Activated T-helper 1 cell treated with anti-CD3 and anti-CD28 coated beads, Interleukin-12 subunit alpha, Interleukin-12 subunit beta, Interleukin-2, Interleukin-4 antibody, amounts not matched to agents 30 ng/mL and 10 ng/mL and 1 ng/mL, durations not matched to agents 14 hours and 24 hours and 36 hours (primary cell): ENCODE measurements at regions of chr3 and their contacts with region 1.

Region 1: GRCh38 chr3:47781685-47782445 is at the start of gene SMARCC1:
- DNase-seq: peak; percentile 98
- H3K4me3 Mint-ChIP-seq: peak within 1 kb of the TSS; percentile 96
- H3K27ac Mint-ChIP-seq: peak within 1 kb of the TSS; percentile 98
- H3K4me1 Mint-ChIP-seq: peaks cover 28% of the 10 kb centered on the region
- H3K27me3 Mint-ChIP-seq: no peaks in the 10 kb centered on the region
- total RNA-seq, gene SMARCC1: 136 and 148 TPM in 2 replicates

Region 2: DNA sequence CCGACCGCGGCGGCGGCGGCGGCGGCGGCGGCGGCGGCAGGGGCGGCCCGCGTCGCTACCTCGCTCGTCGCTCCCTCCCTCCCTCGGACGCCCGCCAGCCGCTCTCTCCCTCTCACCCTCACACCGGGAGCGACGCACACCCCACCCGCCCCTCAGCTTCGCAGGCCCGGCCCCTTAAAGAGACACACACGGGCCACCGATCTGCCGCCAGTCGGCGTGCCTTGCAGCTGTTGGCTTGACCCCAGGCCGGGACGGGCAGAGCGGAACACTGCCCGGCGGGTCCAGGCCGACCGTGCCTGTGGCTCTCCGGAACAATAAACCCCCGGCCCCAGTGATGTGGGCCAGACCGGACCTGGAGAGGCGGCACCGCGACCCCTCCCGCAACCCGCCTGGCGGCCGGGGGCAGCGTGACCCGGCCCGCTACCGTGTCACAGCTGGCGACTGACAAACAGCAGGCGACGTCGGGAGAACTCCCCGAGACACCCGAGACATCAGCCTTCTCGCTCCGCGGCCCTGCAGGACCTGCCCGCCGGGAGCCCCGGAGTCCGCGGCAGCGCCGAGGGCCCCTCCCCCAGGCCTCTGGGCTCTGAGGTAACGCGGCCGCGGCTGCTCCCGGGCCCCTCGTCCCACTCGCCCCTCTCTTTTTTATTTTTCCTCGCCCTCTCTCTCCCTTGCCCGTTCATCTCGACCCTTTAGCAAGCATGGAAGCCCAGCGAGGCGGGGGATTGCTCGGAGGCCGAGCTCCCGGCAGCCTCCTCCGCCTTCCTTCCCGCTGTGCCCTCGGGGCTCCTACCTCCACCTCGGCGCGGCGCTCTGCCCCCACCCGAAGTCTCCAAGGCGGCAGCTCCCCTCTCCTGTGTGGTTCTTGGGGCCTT is 617.6 kb before region 1 on chr3 and contains the start of gene SETD2:
- intact Hi-C with region 1: loop called (anchors 10 kb)
- DNase-seq: peak; percentile 75
- H3K4me3 Mint-ChIP-seq: peak within 1 kb of the TSS; percentile 99
- H3K27ac Mint-ChIP-seq: peak within 1 kb of the TSS; percentile 100
- H3K4me1 Mint-ChIP-seq: peaks cover 53% of the 10 kb centered on the region
- H3K27me3 Mint-ChIP-seq: peaks cover 2% of the 10 kb centered on the region
- total RNA-seq, gene SETD2: 41.2 and 45.7 TPM in 2 replicates

Region 3: GRCh38 chr3:47380601-47381316 is 401.1 kb before region 1 on chr3 and contains the start of gene PTPN23:
- intact Hi-C with region 1: loop called (anchors 1 kb)
- DNase-seq: peak; percentile 99
- H3K4me3 Mint-ChIP-seq: peak within 1 kb of the TSS; percentile 100
- H3K27ac Mint-ChIP-seq: peak within 1 kb of the TSS; percentile 100
- H3K4me1 Mint-ChIP-seq: peaks cover 43% of the 10 kb centered on the region
- H3K27me3 Mint-ChIP-seq: no peaks in the 10 kb centered on the region
- total RNA-seq, gene PTPN23: 33.7 and 35.1 TPM in 2 replicates

Region 4: DNA sequence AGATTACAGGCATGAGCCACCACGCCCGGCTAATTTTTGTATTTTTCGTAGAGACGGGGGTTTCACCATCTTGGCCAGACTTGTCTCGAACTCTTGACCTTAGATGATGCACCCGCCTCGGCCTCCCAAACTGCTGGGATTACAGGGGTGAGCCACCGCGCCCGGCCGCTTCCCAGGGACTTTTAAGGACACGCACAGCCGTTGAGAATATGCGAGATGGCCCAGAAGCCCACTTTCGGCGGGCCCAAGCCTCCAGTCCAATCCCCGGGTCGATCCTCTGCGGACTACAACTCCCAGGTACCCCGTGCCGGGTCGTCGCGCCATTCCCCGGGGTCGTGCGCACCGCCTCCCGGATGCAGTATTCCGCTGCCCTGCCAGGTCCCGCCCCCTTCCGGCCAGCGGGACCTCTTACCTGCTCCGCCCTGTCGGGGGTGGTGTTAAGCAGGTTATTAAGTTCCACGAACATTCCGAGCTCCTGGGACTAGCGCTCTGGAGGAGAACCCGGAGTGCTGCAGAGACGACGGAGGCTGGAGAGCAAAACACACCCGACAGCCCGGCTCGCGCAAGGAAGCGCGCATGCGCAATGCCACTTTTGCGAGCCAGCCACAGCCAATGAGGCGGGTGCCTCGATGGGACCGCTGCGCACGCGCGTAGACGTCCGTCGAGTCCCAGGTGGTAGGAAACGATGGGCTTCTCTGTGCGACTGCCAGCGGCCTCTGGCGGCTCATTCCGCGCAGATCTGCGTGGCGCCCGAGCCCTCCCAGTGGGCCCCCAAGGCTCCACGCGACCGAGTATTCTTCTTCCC is 268.5 kb before region 1 on chr3 and contains the start of gene ELP6:
- intact Hi-C with region 1: loop called (anchors 1 kb)
- DNase-seq: peak; percentile 95
- H3K4me3 Mint-ChIP-seq: peak within 1 kb of the TSS; percentile 97
- H3K27ac Mint-ChIP-seq: peak within 1 kb of the TSS; percentile 98
- H3K4me1 Mint-ChIP-seq: peaks cover 18% of the 10 kb centered on the region
- H3K27me3 Mint-ChIP-seq: no peaks in the 10 kb centered on the region
- total RNA-seq, gene ELP6: 44.7 and 47.9 TPM in 2 replicates

Region 5: GRCh38 chr3:47731061-47731460 is 50.8 kb before region 1 on chr3:
- intact Hi-C with region 1: loop called (anchors 5 kb)
- DNase-seq: no peak
- H3K4me3 Mint-ChIP-seq: no peak overlapping the region
- H3K27ac Mint-ChIP-seq: no peak overlapping the region
- H3K4me1 Mint-ChIP-seq: peaks cover 7% of the 10 kb centered on the region
- H3K27me3 Mint-ChIP-seq: no peaks in the 10 kb centered on the region

Region 6: GRCh38 chr3:47908744-47909143 is 126.9 kb after region 1 on chr3:
- intact Hi-C with region 1: no loop called
- DNase-seq: no peak
- H3K4me3 Mint-ChIP-seq: no peak overlapping the region
- H3K27ac Mint-ChIP-seq: no peak overlapping the region
- H3K4me1 Mint-ChIP-seq: peaks cover 21% of the 10 kb centered on the region
- H3K27me3 Mint-ChIP-seq: no peaks in the 10 kb centered on the region

Region 7: DNA sequence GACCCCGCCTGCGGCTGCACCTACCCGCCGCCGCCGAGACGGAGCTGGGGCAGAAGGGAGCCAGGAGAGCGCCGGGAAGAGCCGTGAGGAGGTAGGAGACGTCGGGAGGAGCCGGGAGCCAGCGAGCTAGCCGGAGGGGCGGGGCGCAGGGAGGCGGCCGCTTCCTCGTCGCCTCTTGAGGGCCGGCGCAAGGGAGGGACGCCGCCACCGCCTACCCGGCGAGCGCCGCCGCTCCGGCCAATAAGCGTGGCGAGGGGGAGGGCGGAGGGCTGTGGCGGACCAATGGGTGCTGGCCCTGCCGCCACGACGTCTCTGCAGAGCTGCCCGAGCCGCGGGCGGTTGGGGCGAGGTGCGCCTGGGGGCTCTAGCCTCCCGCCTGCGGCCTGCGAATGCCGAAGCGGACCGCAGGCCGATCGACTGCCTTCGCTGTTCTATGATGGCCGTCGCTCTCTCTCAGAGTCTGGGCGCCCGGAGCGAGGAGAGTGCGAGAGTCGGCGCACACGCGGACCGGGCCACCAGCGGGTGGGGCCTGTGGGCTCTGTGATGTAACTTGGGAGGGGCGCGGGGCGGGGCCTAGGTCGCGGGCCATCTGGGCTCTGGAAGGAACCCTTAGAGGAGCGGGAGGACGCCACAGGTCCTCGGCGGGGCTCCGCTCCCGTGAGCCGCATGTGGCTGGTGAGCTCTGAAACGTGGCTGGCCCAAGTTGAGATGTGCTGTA is 307.0 kb after region 1 on chr3:
- intact Hi-C with region 1: loop called (anchors 2 kb)
- DNase-seq: peak; percentile 94
- H3K4me3 Mint-ChIP-seq: peak overlapping the region; percentile 97
- H3K27ac Mint-ChIP-seq: peak overlapping the region; percentile 99
- H3K4me1 Mint-ChIP-seq: peaks cover 35% of the 10 kb centered on the region
- H3K27me3 Mint-ChIP-seq: peaks cover 7% of the 10 kb centered on the region

Region 8: GRCh38 chr3:48157950-48158376 is 376.1 kb after region 1 on chr3:
- intact Hi-C with region 1: no loop called
- DNase-seq: peak; percentile 28
- H3K4me3 Mint-ChIP-seq: no peak overlapping the region
- H3K27ac Mint-ChIP-seq: no peak overlapping the region
- H3K4me1 Mint-ChIP-seq: no peaks in the 10 kb centered on the region
- H3K27me3 Mint-ChIP-seq: no peaks in the 10 kb centered on the region

Region 9: GRCh38 chr3:48232734-48233133 is 450.9 kb after region 1 on chr3:
- intact Hi-C with region 1: no loop called
- DNase-seq: peak; percentile 26
- H3K4me3 Mint-ChIP-seq: no peak overlapping the region
- H3K27ac Mint-ChIP-seq: no peak overlapping the region
- H3K4me1 Mint-ChIP-seq: peaks cover 10% of the 10 kb centered on the region
- H3K27me3 Mint-ChIP-seq: no peaks in the 10 kb centered on the region

Region 10: GRCh38 chr3:48439820-48440589 is 658.1 kb after region 1 on chr3 and contains the starts of genes CCDC51 and TMA7:
- intact Hi-C with region 1: loop called (anchors 10 kb)
- DNase-seq: peak; percentile 98
- H3K4me3 Mint-ChIP-seq: peak within 1 kb of the TSS; percentile 98
- H3K27ac Mint-ChIP-seq: peak within 1 kb of the TSS; percentile 94
- H3K4me1 Mint-ChIP-seq: peaks cover 26% of the 10 kb centered on the region
- H3K27me3 Mint-ChIP-seq: no peaks in the 10 kb centered on the region
- total RNA-seq, gene CCDC51: 26.0 and 26.3 TPM in 2 replicates
- total RNA-seq, gene TMA7: 262 and 266 TPM in 2 replicates

Region 11: GRCh38 chr3:48835650-48836366 is 1053.9 kb after region 1 on chr3:
- intact Hi-C with region 1: no loop called
- DNase-seq: no peak
- H3K4me3 Mint-ChIP-seq: no peak overlapping the region
- H3K27ac Mint-ChIP-seq: no peak overlapping the region
- H3K4me1 Mint-ChIP-seq: peaks cover 5% of the 10 kb centered on the region
- H3K27me3 Mint-ChIP-seq: no peaks in the 10 kb centered on the region